ENCODE measurements at regions of chr7 and their contacts with region 1.

Region 1: DNA sequence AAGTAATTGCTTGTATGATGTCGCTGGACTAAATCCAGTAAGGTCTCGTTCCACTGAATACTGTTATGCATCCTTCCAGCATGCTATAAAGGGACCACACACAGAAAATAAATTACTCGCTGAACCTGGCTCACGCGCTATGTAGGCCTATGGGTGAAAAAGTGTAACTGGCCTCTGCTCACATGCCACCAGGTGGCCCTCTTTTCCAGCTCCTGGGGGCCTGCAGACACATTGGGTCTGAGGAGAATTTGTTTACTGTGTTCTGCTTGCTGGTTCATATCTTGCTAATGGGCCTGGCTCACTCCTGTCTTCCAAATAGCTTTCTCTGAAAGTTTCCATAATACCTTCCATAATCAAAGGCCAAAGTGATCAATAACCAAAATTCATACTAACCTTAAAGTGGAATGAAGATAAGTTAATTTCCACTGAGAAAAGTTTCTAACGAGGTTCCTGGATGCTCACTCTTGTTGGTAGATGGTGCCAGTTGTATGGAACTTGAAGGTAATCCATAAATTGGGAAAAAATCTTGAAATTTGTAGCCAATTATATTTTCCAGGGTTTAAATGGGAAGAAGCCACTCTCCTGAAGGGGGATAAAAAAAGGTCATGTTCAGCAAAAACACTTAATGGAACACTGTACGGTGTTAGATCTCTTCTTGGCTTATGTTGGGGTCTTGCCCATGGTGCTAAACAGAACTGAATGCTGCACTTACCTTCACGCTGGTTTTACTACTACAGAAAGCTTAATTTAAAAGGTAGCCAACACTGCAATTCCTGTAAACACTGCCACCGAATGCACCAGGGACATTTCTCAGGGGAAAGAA is 27.0 kb upstream of the ZPBP start:
- DNase-seq: peak; percentile 20
- H3K4me3 Mint-ChIP-seq: no peak overlapping the region
- H3K27ac Mint-ChIP-seq: no peak overlapping the region
- H3K4me1 Mint-ChIP-seq: no peaks in the 10 kb centered on the region
- H3K27me3 Mint-ChIP-seq: peaks cover 58% of the 10 kb centered on the region
- CTCF ChIP-seq: no peak

Region 2: DNA sequence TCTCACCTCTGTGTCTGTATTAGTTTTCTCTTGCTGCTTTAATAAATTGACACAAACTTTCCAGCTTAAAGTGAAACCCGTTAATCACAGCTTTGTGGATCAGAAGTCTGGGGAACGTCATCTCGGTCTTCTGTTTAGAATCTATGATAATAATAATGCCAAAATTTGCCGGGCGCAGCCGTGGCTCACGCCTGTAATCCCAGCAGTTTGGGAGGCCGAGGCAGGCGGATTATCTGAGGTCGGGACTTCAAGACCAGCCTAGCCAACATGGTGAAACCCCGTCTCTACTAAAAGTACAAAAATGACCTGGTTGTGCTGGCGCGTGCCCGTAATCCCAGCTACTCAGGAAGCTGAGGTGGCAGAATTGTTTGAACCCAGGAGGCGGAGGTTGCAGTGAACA is 18.2 kb before region 1 on chr7:
- CTCF ChIA-PET with region 1: interaction called, 10 read pairs
- POLR2A ChIA-PET with region 1: no interaction called
- intact Hi-C with region 1: no loop called
- DNase-seq: no peak
- H3K4me3 Mint-ChIP-seq: no peak overlapping the region
- H3K27ac Mint-ChIP-seq: no peak overlapping the region
- H3K4me1 Mint-ChIP-seq: no peaks in the 10 kb centered on the region
- H3K27me3 Mint-ChIP-seq: peaks cover 88% of the 10 kb centered on the region
- CTCF ChIP-seq: no peak

Measured in MCF 10A (cell line).